ENCODE measurements at regions of chr2 and their contacts with region 1.

Region 1: DNA sequence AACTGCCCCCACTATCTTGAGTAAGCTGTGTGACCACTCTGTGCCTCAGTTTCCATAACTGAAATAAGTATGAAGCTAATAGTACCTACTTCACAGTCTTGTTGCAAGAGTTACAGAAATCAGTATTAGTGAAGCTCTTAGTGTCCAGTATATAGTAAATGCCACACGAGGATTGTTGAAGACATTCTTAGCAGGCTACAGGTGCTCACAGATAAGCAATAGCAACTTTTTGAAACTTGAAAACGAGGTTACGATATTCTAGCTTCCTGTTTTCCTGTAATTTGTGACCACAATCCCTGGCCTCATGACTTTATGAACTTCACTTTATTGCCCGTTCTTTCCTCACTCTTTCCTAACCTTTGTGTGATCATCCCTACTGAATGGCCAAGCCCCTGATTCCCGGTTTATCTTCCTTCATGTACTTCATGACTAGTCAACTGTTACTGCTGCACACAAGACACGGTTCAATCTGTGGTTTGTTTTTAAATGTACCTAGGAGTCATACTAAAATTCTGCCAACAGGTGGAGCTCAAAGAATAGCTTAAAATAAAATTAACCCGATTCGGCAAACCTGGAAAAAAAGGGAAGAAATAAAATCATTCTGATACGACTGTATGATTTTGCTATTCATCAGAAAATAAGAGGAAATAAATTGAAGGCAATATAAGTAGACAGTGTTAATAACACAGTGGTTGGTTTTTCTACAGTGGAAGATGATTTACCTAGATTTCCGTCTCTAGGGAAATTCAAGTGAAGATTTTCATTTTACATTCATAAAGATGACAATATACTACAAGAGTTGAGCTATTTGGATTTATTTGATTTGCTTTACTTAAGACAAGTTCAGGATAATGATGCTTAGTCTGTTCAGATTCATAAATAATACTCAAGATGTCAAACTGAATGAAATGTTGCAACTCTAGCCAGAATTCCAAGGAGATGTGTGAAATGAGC is 38.1 kb upstream of the STAT1 start:
- DNase-seq: peak in 3 of 9 experiments; percentile 60 to 77 (median 67)
- ATAC-seq: peak; percentile 72
- H3K4me3 ChIP-seq: no peak overlapping the region
- H3K4me3 Mint-ChIP-seq: no peak overlapping the region
- H3K27ac ChIP-seq: peak overlapping the region in 1 of 2 experiments; percentile 43
- H3K27ac Mint-ChIP-seq: no peak overlapping the region
- H3K4me1 ChIP-seq: peaks cover 18% of the 10 kb centered on the region
- H3K4me1 Mint-ChIP-seq: peaks cover 26% of the 10 kb centered on the region
- H3K27me3 ChIP-seq: no peaks in the 10 kb centered on the region
- H3K27me3 Mint-ChIP-seq: no peaks in the 10 kb centered on the region
- CTCF ChIP-seq: peak; percentile 99

Region 2: DNA sequence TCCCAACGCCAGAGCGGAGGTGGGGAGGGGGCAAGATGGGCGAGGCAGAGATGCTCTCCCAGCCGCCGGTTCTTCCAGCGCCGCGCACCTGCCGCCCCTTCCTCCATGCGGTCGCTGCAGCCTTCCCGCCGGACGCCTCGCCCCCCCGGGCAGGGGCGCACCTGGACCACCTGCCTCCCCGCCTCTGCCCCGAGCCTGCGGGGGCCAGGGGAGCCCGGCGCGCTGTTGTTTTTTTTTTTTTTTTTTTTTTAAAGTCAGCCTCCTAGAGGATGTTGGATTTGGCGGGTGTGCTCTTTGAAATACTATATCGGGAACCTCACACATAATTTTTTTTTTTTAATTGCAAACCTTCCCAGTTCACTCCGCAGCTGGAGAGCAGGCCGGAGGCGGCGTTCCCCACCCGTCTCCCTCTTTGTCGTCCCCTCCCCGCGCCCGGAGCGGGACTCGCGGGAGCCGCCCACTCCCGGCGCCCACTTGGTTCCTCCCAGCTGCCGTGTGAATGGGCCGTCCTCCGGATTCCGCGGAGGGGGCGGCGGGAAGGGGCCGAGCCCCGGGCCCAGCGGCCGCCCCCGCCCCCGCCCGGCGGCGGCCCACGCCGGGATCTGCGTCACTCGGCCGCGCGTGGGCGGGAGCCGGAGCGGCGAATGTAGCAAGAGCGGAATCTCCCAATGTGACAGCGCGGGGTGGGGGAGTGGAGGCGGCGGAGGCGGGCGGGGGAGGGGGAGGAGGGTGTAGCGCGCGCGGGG is 403.6 kb before region 1 on chr2:
- CTCF ChIA-PET with region 1: no interaction called
- POLR2A ChIA-PET with region 1: no interaction called
- intact Hi-C with region 1: no loop called
- DNase-seq: peak; percentile 80 to 97 (median 88)
- ATAC-seq: peak; percentile 81
- H3K4me3 ChIP-seq: peak overlapping the region; percentile 58 to 63
- H3K4me3 Mint-ChIP-seq: peak overlapping the region; percentile 84
- H3K27ac ChIP-seq: peak overlapping the region; percentile 63 to 84
- H3K27ac Mint-ChIP-seq: peak overlapping the region; percentile 88
- H3K4me1 ChIP-seq: peaks cover 26% of the 10 kb centered on the region
- H3K4me1 Mint-ChIP-seq: peaks cover 44% of the 10 kb centered on the region
- H3K27me3 ChIP-seq: no peaks in the 10 kb centered on the region
- H3K27me3 Mint-ChIP-seq: no peaks in the 10 kb centered on the region
- CTCF ChIP-seq: no peak

Region 3: DNA sequence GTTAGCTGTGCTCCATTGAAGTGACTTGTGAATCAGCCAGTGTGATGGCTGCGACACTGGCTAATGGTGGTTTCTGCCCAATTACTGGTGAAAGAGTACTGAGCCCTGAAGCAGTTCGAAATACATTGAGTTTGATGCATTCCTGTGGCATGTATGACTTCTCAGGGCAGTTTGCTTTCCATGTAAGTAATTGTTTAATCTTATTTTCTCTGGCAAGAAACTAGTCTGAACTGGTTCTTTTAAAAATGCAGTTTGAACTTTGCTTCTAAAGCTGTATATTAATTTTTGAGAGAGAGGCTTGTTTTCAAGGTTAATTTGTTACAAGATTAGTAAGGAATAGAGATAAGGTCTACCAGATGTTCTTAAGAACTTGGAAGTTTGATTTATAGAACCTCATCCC is 124.8 kb before region 1 on chr2:
- CTCF ChIA-PET with region 1: no interaction called
- POLR2A ChIA-PET with region 1: no interaction called
- intact Hi-C with region 1: no loop called
- DNase-seq: no peak
- ATAC-seq: no peak
- H3K4me3 ChIP-seq: no peak overlapping the region
- H3K4me3 Mint-ChIP-seq: no peak overlapping the region
- H3K27ac ChIP-seq: no peak overlapping the region
- H3K27ac Mint-ChIP-seq: peak overlapping the region; percentile 37
- H3K4me1 ChIP-seq: no peaks in the 10 kb centered on the region
- H3K4me1 Mint-ChIP-seq: peaks cover 4% of the 10 kb centered on the region
- H3K27me3 ChIP-seq: no peaks in the 10 kb centered on the region
- H3K27me3 Mint-ChIP-seq: no peaks in the 10 kb centered on the region
- CTCF ChIP-seq: no peak

Region 4: DNA sequence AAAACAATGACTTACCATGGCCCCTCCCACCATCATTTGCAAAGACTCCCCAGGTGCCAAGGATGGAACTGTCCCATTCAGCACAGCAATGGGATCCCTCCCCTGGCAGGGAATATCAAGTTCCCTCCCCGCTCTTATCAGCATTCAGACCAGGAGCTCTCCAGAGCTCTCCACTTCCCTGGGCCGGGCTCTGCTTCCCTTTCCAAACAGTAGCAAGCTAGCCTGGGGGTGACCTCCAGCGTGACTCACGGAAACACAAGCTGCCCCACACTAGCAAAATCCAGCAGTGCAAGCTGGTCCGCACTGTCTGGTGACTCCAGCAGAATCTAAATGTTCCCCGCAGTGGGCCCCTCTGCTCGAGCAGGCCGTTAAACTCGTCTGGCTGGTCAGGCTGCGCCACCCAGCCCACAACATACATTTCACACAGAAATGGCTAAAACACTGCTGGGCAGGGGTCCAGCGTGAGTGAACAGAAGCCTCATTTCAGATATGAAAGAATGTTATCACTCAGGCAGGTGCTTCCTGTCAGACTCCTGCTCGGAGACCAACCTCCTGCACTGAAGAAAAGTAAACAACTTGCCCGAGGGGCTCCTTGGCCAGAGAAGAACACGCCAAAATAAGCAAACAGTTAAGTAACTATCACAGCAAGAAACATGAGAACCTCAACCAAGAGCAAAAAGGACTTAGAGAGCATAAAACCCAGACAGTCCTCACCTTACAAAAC is 72.0 kb before region 1 on chr2:
- CTCF ChIA-PET with region 1: no interaction called
- POLR2A ChIA-PET with region 1: no interaction called
- intact Hi-C with region 1: no loop called
- DNase-seq: no peak
- ATAC-seq: no peak
- H3K4me3 ChIP-seq: no peak overlapping the region
- H3K4me3 Mint-ChIP-seq: peak overlapping the region; percentile 29
- H3K27ac ChIP-seq: peak overlapping the region in 1 of 2 experiments; percentile 13
- H3K27ac Mint-ChIP-seq: peak overlapping the region; percentile 90
- H3K4me1 ChIP-seq: peaks cover 32% of the 10 kb centered on the region
- H3K4me1 Mint-ChIP-seq: peaks cover 48% of the 10 kb centered on the region
- H3K27me3 ChIP-seq: no peaks in the 10 kb centered on the region
- H3K27me3 Mint-ChIP-seq: no peaks in the 10 kb centered on the region
- CTCF ChIP-seq: no peak

Region 5: DNA sequence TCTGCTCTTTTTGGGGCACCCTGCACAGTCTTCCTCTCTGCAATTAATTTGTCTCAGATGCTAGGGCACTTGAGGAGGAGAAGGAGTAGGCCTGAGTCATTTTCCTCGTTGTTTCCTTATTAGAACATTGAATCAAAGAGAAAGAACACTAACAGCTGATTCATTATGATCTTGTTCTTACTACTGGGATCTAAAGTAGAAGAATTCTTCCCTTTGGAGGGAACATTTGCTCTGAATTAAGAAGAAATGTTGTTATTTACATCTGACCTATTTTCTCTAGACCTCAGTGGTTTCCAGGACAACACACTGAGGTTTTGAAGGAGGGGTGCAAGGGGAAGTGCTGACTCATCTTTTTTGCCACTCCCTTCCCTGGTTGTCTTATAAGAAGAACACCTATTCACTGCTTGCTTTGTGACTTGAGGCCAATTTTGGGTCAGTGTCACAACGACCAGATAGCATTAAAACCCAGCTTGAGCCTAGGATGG is 13.8 kb before region 1 on chr2:
- CTCF ChIA-PET with region 1: interaction called, 36 read pairs
- POLR2A ChIA-PET with region 1: interaction called, 7 read pairs
- intact Hi-C with region 1: no loop called
- DNase-seq: peak in 4 of 9 experiments; percentile 34 to 78 (median 54)
- ATAC-seq: peak; percentile 74
- H3K4me3 ChIP-seq: no peak overlapping the region
- H3K4me3 Mint-ChIP-seq: no peak overlapping the region
- H3K27ac ChIP-seq: peak overlapping the region in 1 of 2 experiments; percentile 76
- H3K27ac Mint-ChIP-seq: peak overlapping the region; percentile 83
- H3K4me1 ChIP-seq: peaks cover 11% of the 10 kb centered on the region
- H3K4me1 Mint-ChIP-seq: peaks cover 28% of the 10 kb centered on the region
- H3K27me3 ChIP-seq: no peaks in the 10 kb centered on the region
- H3K27me3 Mint-ChIP-seq: no peaks in the 10 kb centered on the region
- CTCF ChIP-seq: no peak

Region 6: GRCh38 chr2:191087311-191087710 is 35.2 kb after region 1 on chr2:
- CTCF ChIA-PET with region 1: no interaction called
- POLR2A ChIA-PET with region 1: no interaction called
- intact Hi-C with region 1: no loop called
- DNase-seq: no peak
- ATAC-seq: no peak
- H3K4me3 ChIP-seq: no peak overlapping the region
- H3K4me3 Mint-ChIP-seq: no peak overlapping the region
- H3K27ac ChIP-seq: no peak overlapping the region
- H3K27ac Mint-ChIP-seq: no peak overlapping the region
- H3K4me1 ChIP-seq: peaks cover 4% of the 10 kb centered on the region
- H3K4me1 Mint-ChIP-seq: peaks cover 34% of the 10 kb centered on the region
- H3K27me3 ChIP-seq: no peaks in the 10 kb centered on the region
- H3K27me3 Mint-ChIP-seq: no peaks in the 10 kb centered on the region
- CTCF ChIP-seq: no peak

Region 7: GRCh38 chr2:191114403-191114886 is 62.3 kb after region 1 on chr2:
- CTCF ChIA-PET with region 1: interaction called, 12 read pairs
- POLR2A ChIA-PET with region 1: no interaction called
- intact Hi-C with region 1: no loop called
- DNase-seq: peak in 5 of 9 experiments; percentile 25 to 85 (median 58)
- ATAC-seq: peak; percentile 65
- H3K4me3 ChIP-seq: peak overlapping the region in 1 of 2 experiments; percentile 16
- H3K4me3 Mint-ChIP-seq: peak overlapping the region; percentile 71
- H3K27ac ChIP-seq: peak overlapping the region; percentile 47 to 96
- H3K27ac Mint-ChIP-seq: peak overlapping the region; percentile 96
- H3K4me1 ChIP-seq: peaks cover 38% of the 10 kb centered on the region
- H3K4me1 Mint-ChIP-seq: peaks cover 76% of the 10 kb centered on the region
- H3K27me3 ChIP-seq: no peaks in the 10 kb centered on the region
- H3K27me3 Mint-ChIP-seq: no peaks in the 10 kb centered on the region
- CTCF ChIP-seq: no peak

Region 8: DNA sequence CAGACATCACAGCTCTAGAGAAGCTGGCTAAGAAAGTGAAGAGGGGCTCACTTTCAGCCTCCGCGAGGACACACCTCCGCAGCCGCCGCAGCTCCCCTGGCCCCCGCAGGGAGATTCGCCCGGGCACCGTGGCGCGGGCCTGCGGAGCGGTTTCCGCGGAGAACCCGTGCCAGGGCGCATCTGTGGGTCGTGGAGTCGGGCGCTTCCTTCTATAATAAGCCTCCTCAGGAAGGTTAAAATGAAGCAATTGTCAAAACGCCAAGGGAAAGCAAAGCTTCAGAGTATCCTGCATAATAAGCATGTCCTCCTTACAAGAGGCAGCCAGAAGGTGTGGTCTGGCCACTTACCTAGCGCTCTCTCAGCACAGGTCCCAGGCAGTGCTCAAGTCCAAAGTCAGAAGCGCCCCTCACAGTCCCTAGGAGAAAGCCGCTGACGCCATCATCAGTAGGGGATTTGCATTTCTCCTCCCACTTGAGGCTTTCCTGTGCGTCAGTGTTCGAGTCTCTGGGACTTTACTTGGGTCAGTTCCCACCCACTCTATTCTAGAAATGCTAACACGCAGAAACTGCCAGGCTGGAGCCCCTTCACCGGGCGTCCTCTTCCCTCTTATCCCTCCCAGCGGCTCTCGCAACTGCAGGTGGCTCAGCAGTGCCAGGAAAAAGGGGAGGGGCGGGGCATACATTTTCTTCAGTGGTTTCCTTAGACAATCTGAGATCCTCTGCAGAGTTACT is 98.7 kb after region 1 on chr2 and contains the start of gene STAT4:
- CTCF ChIA-PET with region 1: interaction called, 483 read pairs
- POLR2A ChIA-PET with region 1: interaction called, 45 read pairs
- intact Hi-C with region 1: loop called (anchors 1 kb)
- DNase-seq: peak; percentile 64 to 98 (median 82)
- ATAC-seq: peak; percentile 82
- H3K4me3 ChIP-seq: peak within 1 kb of the TSS; percentile 80 to 90
- H3K4me3 Mint-ChIP-seq: peak within 1 kb of the TSS; percentile 96
- H3K27ac ChIP-seq: peak within 1 kb of the TSS; percentile 93 to 98
- H3K27ac Mint-ChIP-seq: peak within 1 kb of the TSS; percentile 95
- H3K4me1 ChIP-seq: peaks cover 49% of the 10 kb centered on the region
- H3K4me1 Mint-ChIP-seq: peaks cover 54% of the 10 kb centered on the region
- H3K27me3 ChIP-seq: no peaks in the 10 kb centered on the region
- H3K27me3 Mint-ChIP-seq: no peaks in the 10 kb centered on the region
- CTCF ChIP-seq: no peak
- total RNA-seq, gene STAT4: 136 to 141 TPM

Region 9: DNA sequence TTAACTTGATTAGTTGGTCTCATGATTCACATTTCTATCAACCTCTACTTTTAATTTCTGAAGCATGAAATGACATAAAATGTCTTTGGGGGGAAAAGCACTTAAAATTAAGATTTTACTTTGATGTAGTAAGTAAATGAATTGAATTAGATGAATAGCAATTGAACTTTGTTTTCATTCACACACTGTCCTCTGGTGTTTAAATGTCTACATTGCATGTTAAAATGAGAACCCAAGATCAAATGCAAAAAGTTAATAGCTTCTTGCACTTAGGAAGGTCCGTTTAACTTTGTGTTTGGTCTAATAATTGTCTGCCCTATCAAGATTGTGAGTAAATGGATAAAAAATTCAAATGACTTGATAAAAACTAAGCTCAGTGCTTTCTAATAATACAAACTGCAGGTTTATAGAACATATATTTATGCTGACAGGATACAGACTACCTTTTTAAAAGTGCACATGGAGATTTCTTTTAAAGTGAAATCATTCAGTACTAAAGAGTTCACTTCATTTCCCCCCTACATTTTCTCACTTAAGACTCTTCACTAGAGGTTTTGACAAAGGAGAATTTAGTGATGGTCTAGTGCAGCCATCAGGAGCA is 469.6 kb after region 1 on chr2:
- CTCF ChIA-PET with region 1: interaction called, 6 read pairs
- POLR2A ChIA-PET with region 1: no interaction called
- intact Hi-C with region 1: loop called (anchors 1 to 2 kb)
- DNase-seq: peak in 2 of 9 experiments; percentile 32 to 48
- ATAC-seq: no peak
- H3K4me3 ChIP-seq: no peak overlapping the region
- H3K4me3 Mint-ChIP-seq: no peak overlapping the region
- H3K27ac ChIP-seq: no peak overlapping the region
- H3K27ac Mint-ChIP-seq: no peak overlapping the region
- H3K4me1 ChIP-seq: no peaks in the 10 kb centered on the region
- H3K4me1 Mint-ChIP-seq: no peaks in the 10 kb centered on the region
- H3K27me3 ChIP-seq: no peaks in the 10 kb centered on the region
- H3K27me3 Mint-ChIP-seq: peaks cover 3% of the 10 kb centered on the region
- CTCF ChIP-seq: peak; percentile 69